K562 (cell line): ENCODE measurements at regions of chr4 and their contacts with region 1.

Region 1: DNA sequence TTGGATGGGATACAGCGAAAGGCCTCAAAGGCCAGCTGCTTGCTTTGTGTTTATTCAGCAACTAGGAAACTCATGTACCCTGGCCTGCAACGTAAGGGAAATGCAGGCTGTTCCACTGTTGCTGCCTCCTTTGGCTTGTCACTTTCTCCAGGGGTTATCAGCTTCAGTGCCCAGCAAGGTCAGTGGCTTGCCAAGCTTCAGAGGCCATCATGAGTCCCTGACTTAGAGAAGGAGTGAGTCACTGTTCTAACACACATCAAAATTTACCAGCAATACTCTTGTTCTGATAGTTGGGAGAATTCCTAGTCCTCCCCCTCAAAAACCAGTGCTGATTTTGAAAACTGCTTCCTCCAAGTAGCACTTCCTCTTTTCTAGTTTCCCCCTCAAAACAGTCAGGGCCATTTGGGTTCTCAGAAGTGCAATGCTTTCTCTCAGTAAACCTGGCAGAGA is 250.8 kb downstream of the ARHGAP24 start:
- DNase-seq: peak; percentile 7 to 67 (median 24)
- ATAC-seq: peak; percentile 87
- H3K4me3 ChIP-seq: no peak overlapping the region
- H3K27ac ChIP-seq: peak overlapping the region; percentile 78
- H3K4me1 ChIP-seq: peaks cover 5 to 22% of the 10 kb centered on the region in 2 experiments; a peak in 3 of 5 replicates
- H3K27me3 ChIP-seq: no peaks in the 10 kb centered on the region
- CTCF ChIP-seq: no peak
- EP300 ChIP-seq: 0 out of 2 replicates have a peak, but pooled peaks have one; percentile 23
- POLR2A ChIP-seq: no peak
- RAD21 ChIP-seq: no peak; a peak in 1 of 4 replicates

Region 2: GRCh38 chr4:84279678-84280077 is 1446.1 kb before region 1 on chr4:
- CTCF ChIA-PET with region 1: no interaction called
- POLR2A ChIA-PET with region 1: no interaction called
- in situ Hi-C with region 1: no loop called
- intact Hi-C with region 1: no loop called
- DNase-seq: no peak
- ATAC-seq: no peak
- H3K4me3 ChIP-seq: no peak overlapping the region
- H3K27ac ChIP-seq: no peak overlapping the region
- H3K4me1 ChIP-seq: no peaks in the 10 kb centered on the region
- H3K27me3 ChIP-seq: no peaks in the 10 kb centered on the region
- CTCF ChIP-seq: no peak
- EP300 ChIP-seq: no peak
- POLR2A ChIP-seq: no peak
- RAD21 ChIP-seq: no peak

Region 3: DNA sequence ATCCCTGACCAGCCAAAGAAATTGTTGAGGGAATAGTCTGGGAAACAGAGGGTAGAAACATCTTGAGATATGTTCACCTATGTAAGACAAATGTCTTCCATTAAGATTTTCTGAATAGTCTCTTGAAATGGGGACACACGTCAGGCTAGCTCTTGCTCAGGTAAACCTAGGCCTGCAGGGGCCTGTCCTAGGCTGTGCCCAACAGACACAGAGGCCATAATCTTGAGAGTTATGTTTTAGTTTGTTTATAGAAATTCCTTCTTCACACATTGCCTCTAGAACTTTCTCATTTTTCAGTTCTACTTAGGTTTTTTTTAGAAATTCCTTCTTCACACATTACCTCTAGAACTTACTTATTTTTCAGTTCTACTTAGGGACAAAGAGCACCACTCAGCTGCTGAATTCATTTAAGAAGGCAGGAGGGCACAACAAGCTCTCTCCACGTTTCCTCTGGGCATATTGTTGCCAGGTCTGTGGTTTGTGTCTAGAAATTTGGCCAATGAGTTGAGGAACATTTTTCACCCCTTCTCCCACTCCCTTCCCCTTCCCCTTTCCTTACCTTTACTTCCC is 155.9 kb before region 1 on chr4:
- CTCF ChIA-PET with region 1: no interaction called
- POLR2A ChIA-PET with region 1: no interaction called
- in situ Hi-C with region 1: loop called (anchors 10 kb)
- intact Hi-C with region 1: loop called (anchors 5 kb)
- DNase-seq: no peak
- ATAC-seq: peak; percentile 56; the same call in 2 of the 3 replicates
- H3K4me3 ChIP-seq: no peak overlapping the region
- H3K27ac ChIP-seq: no peak overlapping the region
- H3K4me1 ChIP-seq: no peaks in the 10 kb centered on the region
- H3K27me3 ChIP-seq: no peaks in the 10 kb centered on the region
- CTCF ChIP-seq: no peak
- EP300 ChIP-seq: no peak
- POLR2A ChIP-seq: no peak
- RAD21 ChIP-seq: no peak